Lower lobe of right lung (tissue), 2 donors: ENCODE measurements at regions of chr7 and their contacts with region 1.

Region 1: GRCh38 chr7:151372612-151373265 is 31.1 kb downstream of the NUB1 start:
- DNase-seq: no peak
- ATAC-seq: no peak
- H3K4me3 ChIP-seq: no peak overlapping the region
- H3K27ac ChIP-seq: no peak overlapping the region
- H3K4me1 ChIP-seq: peaks cover 8% of the 10 kb centered on the region
- H3K27me3 ChIP-seq: no peaks in the 10 kb centered on the region
- CTCF ChIP-seq: no peak

Region 2: DNA sequence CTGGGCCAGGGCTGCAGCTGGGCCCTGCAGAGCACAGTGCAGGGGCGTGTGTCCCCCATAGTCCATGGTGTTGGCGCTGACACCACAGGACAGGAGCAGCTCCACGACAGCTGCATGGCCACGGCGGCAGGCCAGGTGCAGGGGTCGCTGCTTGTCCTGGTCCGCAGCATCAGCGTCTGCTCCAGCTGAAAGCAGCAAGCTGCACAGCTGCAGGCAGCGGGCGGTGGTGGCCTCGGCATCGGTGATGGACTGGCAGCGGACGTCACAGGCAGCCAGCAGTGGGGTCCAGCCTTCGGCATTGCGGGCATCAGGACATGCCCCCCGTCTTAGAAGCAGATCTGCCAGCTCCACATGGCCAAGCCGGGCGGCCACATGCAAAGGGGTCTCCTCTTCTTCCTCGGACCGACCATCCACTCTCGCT is 191.7 kb before region 1 on chr7:
- intact Hi-C with region 1: no loop called
- DNase-seq: no peak
- ATAC-seq: peak in 1 of 2 donors; percentile 24
- H3K4me3 ChIP-seq: no peak overlapping the region
- H3K27ac ChIP-seq: no peak overlapping the region
- H3K4me1 ChIP-seq: no peaks in the 10 kb centered on the region
- H3K27me3 ChIP-seq: peaks cover 11% of the 10 kb centered on the region
- CTCF ChIP-seq: no peak

Region 3: DNA sequence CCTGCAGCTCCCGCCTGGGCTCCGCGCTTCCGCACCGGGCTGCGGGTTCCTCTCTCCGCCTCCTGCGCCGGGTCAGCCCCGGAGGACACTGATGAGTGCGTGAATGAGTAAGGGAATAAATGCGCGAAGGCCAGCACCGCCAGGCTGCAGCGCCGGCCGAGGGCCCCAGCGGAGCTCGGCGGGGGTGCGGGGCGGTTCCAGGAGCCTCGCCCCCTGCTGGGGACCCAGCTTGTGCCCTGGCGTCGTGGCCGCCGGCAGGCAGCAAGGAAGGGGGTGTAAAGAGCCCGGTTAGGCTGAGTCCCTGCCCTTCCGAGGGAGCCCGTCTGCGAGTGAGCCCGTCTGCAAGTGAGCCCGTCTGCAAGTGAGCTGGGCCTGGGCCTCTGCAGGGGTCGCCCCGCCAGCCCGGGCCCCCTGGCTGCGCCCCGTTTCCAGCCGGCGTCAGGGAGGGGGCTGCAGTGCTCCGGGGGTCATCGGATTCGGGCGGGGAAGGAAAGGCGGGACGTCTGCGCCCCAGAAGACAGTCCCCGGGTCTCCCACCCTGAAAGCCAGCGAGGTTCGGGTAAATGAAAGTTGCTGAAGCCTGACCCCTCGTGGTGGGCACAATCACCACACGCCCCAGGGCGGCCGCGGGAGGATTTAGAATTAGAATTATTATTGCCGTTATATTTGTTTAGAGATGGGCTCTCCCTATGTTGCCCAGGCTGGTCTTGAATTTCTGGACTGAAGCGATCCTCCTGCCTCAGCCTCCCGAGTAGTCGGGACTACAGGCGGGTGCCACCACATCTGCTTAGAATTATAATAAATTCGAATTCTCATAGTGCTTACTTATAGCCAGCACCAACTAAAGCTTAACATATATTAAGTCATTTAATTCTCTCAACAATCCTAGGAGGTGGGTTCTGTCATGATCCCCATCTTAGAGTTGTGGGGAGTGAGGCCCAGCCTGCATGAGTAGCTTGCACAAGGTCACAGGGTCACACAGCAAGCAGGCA is 75.8 kb after region 1 on chr7:
- intact Hi-C with region 1: loop called (anchors 10 kb)
- DNase-seq: peak; percentile 74
- ATAC-seq: peak; percentile 91 to 94
- H3K4me3 ChIP-seq: peak overlapping the region; percentile 66
- H3K27ac ChIP-seq: peak overlapping the region; percentile 64
- H3K4me1 ChIP-seq: peaks cover 8% of the 10 kb centered on the region
- H3K27me3 ChIP-seq: peaks cover 4% of the 10 kb centered on the region
- CTCF ChIP-seq: peak; percentile 89